ENCODE measurements at regions of chr2 and their contacts with region 1.

Region 1: DNA sequence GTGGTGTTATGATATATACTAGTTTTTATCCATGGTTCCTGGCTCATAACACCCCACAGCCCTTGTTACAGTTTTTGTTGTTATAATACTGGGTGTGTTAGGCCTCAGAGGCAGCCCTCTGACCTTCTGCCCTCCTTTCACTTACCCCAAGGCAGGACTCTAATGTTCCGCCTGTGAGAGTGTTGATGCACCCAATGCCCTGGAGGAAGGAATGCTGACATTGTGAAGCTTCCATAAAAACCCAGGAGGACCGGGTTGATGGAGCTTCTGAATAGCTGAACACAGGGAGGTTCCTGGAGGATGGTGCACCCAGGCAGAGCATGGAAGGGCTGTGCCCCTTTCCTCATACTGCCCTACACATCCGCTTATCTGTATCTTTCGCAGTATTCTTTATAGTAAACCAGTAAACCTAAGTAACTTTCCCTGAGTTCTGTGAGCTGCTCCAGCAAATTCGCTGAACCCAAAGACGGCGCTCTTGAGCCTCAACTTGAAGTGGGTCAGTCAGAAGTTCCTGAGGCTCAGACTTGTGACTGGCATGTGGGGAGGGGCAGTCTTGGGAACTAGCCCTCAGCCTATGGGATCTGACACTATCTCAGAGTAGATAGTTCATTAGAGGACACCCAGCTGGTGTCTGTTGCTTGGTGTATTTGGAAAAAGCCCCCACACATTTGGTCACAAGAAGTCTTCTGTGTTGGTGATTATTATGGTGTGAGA is 10.4 kb downstream of the STON1 start:
- DNase-seq: no peak
- ATAC-seq: no peak
- H3K4me3 ChIP-seq: no peak overlapping the region
- H3K27ac ChIP-seq: no peak overlapping the region
- H3K4me1 ChIP-seq: no peaks in the 10 kb centered on the region
- H3K27me3 ChIP-seq: no peaks in the 10 kb centered on the region
- CTCF ChIP-seq: no peak
- POLR2A ChIP-seq: no peak
- RAD21 ChIP-seq: no peak

Region 2: GRCh38 chr2:48519593-48519992 is 20.8 kb before region 1 on chr2:
- CTCF ChIA-PET with region 1: no interaction called
- POLR2A ChIA-PET with region 1: interaction called, 11 read pairs
- dilution Hi-C with region 1: no loop called
- in situ Hi-C with region 1: no loop called
- intact Hi-C with region 1: no loop called
- DNase-seq: no peak
- ATAC-seq: no peak
- H3K4me3 ChIP-seq: no peak overlapping the region
- H3K27ac ChIP-seq: no peak overlapping the region
- H3K4me1 ChIP-seq: peaks cover 1% of the 10 kb centered on the region; the same call in 1 of the 2 replicates
- H3K27me3 ChIP-seq: no peaks in the 10 kb centered on the region
- CTCF ChIP-seq: no peak
- POLR2A ChIP-seq: no peak
- RAD21 ChIP-seq: no peak